Activated CD8-positive, alpha-beta T cell treated with anti-CD3 and anti-CD28 coated beads for 36 hours (primary cell): ENCODE measurements at regions of chr2 and their contacts with region 1.

Region 1: DNA sequence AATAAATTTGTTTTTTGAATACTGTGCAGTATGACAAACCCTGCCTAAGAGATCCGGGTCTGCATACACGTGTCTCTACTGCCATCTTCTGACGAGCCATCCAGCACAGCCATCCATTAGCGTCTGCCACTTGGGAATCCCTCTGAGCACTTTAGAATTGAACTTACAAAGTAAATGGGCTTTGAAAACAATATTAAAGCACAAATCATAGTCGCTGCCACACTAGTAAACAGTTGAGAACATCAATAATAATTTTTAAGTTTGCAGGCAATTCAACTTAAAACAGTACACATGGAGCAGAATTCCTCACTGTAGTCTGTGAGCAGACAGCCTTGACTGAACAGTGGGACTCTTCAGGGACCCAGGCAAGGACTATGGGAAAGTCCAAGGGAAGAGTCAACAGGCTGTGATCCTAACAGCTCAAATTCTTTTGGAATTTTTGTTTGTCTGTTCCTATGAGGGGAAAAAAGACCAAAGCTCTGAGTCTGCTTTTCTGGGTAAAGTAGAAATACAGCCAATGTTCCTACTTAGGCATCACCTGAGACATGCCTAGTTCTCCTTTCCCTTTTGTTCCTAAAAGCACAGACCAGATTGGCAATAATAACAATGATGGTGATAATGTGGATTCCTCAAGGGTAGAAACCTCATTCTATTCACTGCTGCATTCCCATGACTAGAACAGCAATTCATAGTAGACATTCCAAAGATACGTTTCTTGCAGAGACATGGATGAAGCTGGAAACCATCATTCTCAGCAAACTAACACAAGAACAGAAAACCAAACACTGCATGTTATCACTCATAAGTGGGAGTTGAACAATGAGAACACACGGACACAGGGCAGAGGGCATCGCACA is 92.9 kb downstream of the MREG start:
- DNase-seq: peak; percentile 72
- ATAC-seq: peak; percentile 79
- H3K4me3 Mint-ChIP-seq: no peak overlapping the region
- H3K27ac Mint-ChIP-seq: no peak overlapping the region
- H3K4me1 Mint-ChIP-seq: peaks cover 2% of the 10 kb centered on the region
- H3K27me3 Mint-ChIP-seq: peaks cover 1% of the 10 kb centered on the region
- CTCF ChIP-seq: peak; percentile 83

Region 2: DNA sequence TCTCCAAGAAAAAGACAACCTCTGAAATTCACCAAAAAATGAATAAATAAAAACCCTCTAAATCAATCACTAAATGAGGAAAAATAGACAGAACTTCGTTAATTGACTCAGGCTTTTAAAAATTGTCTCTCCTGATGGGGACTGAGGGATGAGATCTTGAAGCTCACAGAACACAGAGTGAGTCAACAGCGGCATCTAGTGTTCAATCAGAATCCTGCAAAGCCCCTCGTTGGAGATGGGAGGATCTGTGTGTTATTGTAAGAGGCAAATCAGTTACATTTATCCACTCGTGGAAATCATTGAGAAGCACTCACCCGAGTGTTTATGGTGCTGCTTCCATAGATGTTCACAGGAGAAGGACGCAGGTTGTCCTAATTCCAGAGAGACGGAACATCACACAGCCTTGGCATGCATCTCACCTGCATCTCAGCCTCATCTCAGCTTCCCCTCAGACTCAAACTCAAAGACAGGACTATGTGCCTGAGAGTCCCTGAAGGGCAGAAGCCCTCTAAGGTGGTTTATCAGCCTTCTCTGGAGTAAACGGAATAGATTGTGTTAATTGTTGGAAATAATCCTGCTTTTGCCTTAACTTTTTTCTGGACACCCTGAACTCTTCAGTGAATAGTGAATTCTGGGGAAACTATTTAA is 10.9 kb after region 1 on chr2:
- CTCF ChIA-PET with region 1: interaction called, 37 read pairs
- POLR2A ChIA-PET with region 1: no interaction called
- intact Hi-C with region 1: no loop called
- DNase-seq: peak; percentile 72
- ATAC-seq: peak; percentile 82
- H3K4me3 Mint-ChIP-seq: no peak overlapping the region
- H3K27ac Mint-ChIP-seq: no peak overlapping the region
- H3K4me1 Mint-ChIP-seq: peaks cover 9% of the 10 kb centered on the region
- H3K27me3 Mint-ChIP-seq: no peaks in the 10 kb centered on the region
- CTCF ChIP-seq: peak; percentile 97

Region 3: DNA sequence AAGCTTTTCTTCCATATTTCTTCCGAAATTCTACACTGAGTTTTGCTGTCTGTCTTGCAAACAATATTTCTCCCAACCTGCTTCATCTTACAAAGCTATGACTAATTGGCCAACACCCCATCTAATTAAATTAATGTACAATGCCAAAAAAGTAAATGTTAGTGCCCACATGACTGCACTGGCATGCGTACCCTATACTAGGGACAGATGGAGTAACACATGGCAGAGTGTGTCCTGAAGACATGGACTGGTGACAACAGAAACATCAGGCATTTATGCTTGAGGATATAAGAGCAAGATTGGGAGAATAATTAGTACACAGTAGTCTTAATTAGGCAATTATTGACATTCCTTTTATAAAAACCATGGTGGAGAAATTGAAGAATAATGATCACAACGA is 26.1 kb after region 1 on chr2:
- CTCF ChIA-PET with region 1: no interaction called
- POLR2A ChIA-PET with region 1: no interaction called
- intact Hi-C with region 1: no loop called
- DNase-seq: no peak
- ATAC-seq: no peak
- H3K4me3 Mint-ChIP-seq: no peak overlapping the region
- H3K27ac Mint-ChIP-seq: no peak overlapping the region
- H3K4me1 Mint-ChIP-seq: peaks cover 2% of the 10 kb centered on the region
- H3K27me3 Mint-ChIP-seq: no peaks in the 10 kb centered on the region
- CTCF ChIP-seq: no peak